PC-9 (cell line): ENCODE measurements at regions of chr17 and their contacts with region 1.

Region 1: GRCh38 chr17:36601303-36602029 is at the start of gene MRM1:
- DNase-seq: peak; percentile 86 to 90
- H3K4me3 ChIP-seq: peak within 1 kb of the TSS; percentile 77
- H3K27ac ChIP-seq: peak within 1 kb of the TSS; percentile 65
- H3K4me1 ChIP-seq: peaks cover 8% of the 10 kb centered on the region; the same call in 1 of the 2 replicates
- H3K27me3 ChIP-seq: no peaks in the 10 kb centered on the region
- CTCF ChIP-seq: no peak
- total RNA-seq, gene MRM1: 9.6 and 10.9 TPM in 2 replicates

Region 2: GRCh38 chr17:36510636-36511035 is 90.8 kb before region 1 on chr17:
- CTCF ChIA-PET with region 1: no interaction called
- POLR2A ChIA-PET with region 1: no interaction called
- intact Hi-C with region 1: no loop called
- DNase-seq: no peak
- H3K4me3 ChIP-seq: no peak overlapping the region
- H3K27ac ChIP-seq: no peak overlapping the region
- H3K4me1 ChIP-seq: no peaks in the 10 kb centered on the region
- H3K27me3 ChIP-seq: no peaks in the 10 kb centered on the region
- CTCF ChIP-seq: no peak

Region 3: GRCh38 chr17:36590082-36590481 is 11.4 kb before region 1 on chr17:
- CTCF ChIA-PET with region 1: interaction called, 11 read pairs
- POLR2A ChIA-PET with region 1: interaction called, 3 read pairs
- intact Hi-C with region 1: no loop called
- DNase-seq: no peak
- H3K4me3 ChIP-seq: no peak overlapping the region
- H3K27ac ChIP-seq: no peak overlapping the region
- H3K4me1 ChIP-seq: peaks cover 17% of the 10 kb centered on the region
- H3K27me3 ChIP-seq: no peaks in the 10 kb centered on the region
- CTCF ChIP-seq: no peak

Region 4: GRCh38 chr17:37220607-37220953 is 619.1 kb after region 1 on chr17:
- CTCF ChIA-PET with region 1: no interaction called
- POLR2A ChIA-PET with region 1: no interaction called
- intact Hi-C with region 1: no loop called
- DNase-seq: no peak
- H3K4me3 ChIP-seq: no peak overlapping the region
- H3K27ac ChIP-seq: peak overlapping the region; percentile 11; the same call in 1 of the 2 replicates
- H3K4me1 ChIP-seq: no peaks in the 10 kb centered on the region
- H3K27me3 ChIP-seq: no peaks in the 10 kb centered on the region
- CTCF ChIP-seq: no peak

Region 5: GRCh38 chr17:37239690-37240334 is 638.3 kb after region 1 on chr17:
- CTCF ChIA-PET with region 1: interaction called, 16 read pairs
- POLR2A ChIA-PET with region 1: no interaction called
- intact Hi-C with region 1: no loop called
- DNase-seq: no peak
- H3K4me3 ChIP-seq: no peak overlapping the region
- H3K27ac ChIP-seq: no peak overlapping the region
- H3K4me1 ChIP-seq: no peaks in the 10 kb centered on the region
- H3K27me3 ChIP-seq: no peaks in the 10 kb centered on the region
- CTCF ChIP-seq: peak; percentile 76